GM12878 (cell line): ENCODE measurements at regions of chr13 and their contacts with region 1.

Region 1: GRCh38 chr13:108475181-108475580 is 154.2 kb upstream of the MYO16 start:
- DNase-seq: no peak
- ATAC-seq: no peak
- H3K4me3 ChIP-seq: no peak overlapping the region
- H3K27ac ChIP-seq: no peak overlapping the region
- H3K4me1 ChIP-seq: no peaks in the 10 kb centered on the region
- H3K27me3 ChIP-seq: no peaks in the 10 kb centered on the region
- CTCF ChIP-seq: no peak
- EP300 ChIP-seq: no peak
- POLR2A ChIP-seq: no peak
- RAD21 ChIP-seq: no peak

Region 2: DNA sequence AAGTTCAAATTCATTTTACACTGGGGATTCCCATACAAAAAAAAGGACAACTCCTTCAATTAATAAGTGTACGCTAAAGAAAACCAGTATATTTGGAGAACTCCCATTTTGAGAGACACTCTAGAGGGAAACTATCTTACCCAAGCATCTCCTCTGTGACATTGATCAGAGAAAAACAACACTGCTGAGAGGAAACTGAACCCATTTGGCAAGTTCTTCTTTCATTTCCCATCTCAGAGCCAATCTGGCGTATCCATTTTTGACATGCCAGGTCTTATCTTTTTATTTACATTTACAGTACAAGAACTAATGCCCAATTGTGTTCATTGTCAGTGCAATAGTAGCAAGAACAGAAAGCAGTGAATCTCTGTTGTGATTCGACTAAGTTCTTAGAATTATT is 290.0 kb before region 1 on chr13:
- CTCF ChIA-PET with region 1: no interaction called
- POLR2A ChIA-PET with region 1: no interaction called
- RAD21 ChIA-PET with region 1: no interaction called
- SMC1A ChIA-PET with region 1: no interaction called
- in situ Hi-C with region 1: no loop called
- intact Hi-C with region 1: no loop called
- DNase-seq: no peak
- ATAC-seq: no peak
- H3K4me3 ChIP-seq: no peak overlapping the region
- H3K27ac ChIP-seq: no peak overlapping the region
- H3K4me1 ChIP-seq: no peaks in the 10 kb centered on the region
- H3K27me3 ChIP-seq: no peaks in the 10 kb centered on the region
- CTCF ChIP-seq: no peak
- EP300 ChIP-seq: no peak
- POLR2A ChIP-seq: no peak
- RAD21 ChIP-seq: no peak

Region 3: GRCh38 chr13:108451121-108451520 is 24.1 kb before region 1 on chr13:
- CTCF ChIA-PET with region 1: no interaction called
- POLR2A ChIA-PET with region 1: no interaction called
- RAD21 ChIA-PET with region 1: no interaction called
- SMC1A ChIA-PET with region 1: no interaction called
- in situ Hi-C with region 1: no loop called
- intact Hi-C with region 1: loop called (anchors 1 kb)
- DNase-seq: no peak
- ATAC-seq: no peak
- H3K4me3 ChIP-seq: no peak overlapping the region
- H3K27ac ChIP-seq: no peak overlapping the region
- H3K4me1 ChIP-seq: no peaks in the 10 kb centered on the region
- H3K27me3 ChIP-seq: no peaks in the 10 kb centered on the region
- CTCF ChIP-seq: no peak
- EP300 ChIP-seq: no peak
- POLR2A ChIP-seq: no peak
- RAD21 ChIP-seq: no peak